HEK293 (cell line): ENCODE measurements at regions of chr13 and their contacts with region 1.

Region 1: GRCh38 chr13:111066544-111066943 is 48.6 kb upstream of the ARHGEF7 start:
- H3K4me3 ChIP-seq: no peak overlapping the region
- H3K27ac ChIP-seq: no peak overlapping the region
- H3K4me1 ChIP-seq: no peaks in the 10 kb centered on the region
- CTCF ChIP-seq: no peak

Region 2: DNA sequence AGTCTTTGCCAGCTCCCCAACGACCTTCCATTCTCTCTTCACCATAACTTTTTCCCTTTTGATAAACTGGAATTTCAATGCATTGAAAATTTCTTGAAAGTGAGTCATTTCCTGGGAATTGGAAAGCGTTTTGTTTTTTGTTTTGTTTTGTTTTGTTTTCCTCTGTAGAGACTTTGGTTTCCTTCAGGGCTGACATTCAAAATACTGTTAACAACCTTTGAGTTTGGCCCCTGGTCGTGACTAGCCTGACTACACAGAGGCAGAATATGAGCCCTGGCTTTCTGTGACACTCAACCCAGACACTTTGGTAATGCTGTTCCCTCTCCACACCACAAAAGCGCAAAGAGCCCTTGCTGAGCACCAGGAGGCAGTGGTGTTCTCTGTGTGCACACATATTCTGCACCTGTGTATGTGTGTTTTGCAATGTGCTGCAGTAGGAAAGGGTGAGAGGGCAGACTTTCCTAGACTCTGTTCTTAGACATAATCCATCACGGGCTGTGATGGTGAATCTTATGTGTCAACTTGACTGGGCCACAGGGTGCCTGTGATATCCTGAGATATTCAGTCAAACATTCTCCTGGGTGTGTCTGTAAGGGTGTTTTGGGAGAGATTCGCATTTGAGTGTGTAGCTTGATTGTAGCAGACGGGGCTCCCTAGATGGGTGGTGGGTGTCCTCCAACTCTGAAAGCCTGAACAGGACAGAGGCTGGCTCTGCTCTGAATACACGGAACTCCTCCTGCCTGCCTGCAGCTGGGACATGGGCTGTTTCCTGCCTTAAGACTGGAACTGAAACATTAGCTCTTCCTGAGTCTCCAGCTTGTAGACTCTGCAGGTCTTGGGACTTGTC is 122.2 kb before region 1 on chr13:
- CTCF ChIA-PET with region 1: interaction called, 11 read pairs
- POLR2A ChIA-PET with region 1: no interaction called
- H3K4me3 ChIP-seq: no peak overlapping the region
- H3K27ac ChIP-seq: no peak overlapping the region
- H3K4me1 ChIP-seq: no peaks in the 10 kb centered on the region
- CTCF ChIP-seq: no peak

Region 3: DNA sequence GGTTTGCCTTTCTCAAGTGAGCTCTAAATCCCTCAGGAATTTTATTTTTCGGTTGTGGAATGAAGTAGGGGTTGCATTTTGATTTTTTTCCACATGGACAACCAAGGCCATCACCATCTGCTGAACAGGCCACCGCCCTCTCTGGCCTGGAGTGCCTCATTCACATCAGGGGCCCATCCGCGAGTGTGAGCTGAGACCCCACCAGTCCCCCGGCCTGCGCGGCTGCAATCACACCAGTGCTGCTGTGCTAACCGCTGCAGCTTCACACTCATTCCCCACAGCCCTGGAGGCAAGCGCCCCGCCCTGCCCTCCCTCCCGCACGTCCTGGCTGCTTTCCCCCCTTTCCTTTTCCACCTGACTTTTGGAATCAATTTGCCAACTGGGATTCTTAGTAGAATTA is 12.8 kb after region 1 on chr13:
- CTCF ChIA-PET with region 1: interaction called, 14 read pairs
- POLR2A ChIA-PET with region 1: no interaction called
- H3K4me3 ChIP-seq: no peak overlapping the region
- H3K27ac ChIP-seq: no peak overlapping the region
- H3K4me1 ChIP-seq: no peaks in the 10 kb centered on the region
- CTCF ChIP-seq: no peak

Region 4: DNA sequence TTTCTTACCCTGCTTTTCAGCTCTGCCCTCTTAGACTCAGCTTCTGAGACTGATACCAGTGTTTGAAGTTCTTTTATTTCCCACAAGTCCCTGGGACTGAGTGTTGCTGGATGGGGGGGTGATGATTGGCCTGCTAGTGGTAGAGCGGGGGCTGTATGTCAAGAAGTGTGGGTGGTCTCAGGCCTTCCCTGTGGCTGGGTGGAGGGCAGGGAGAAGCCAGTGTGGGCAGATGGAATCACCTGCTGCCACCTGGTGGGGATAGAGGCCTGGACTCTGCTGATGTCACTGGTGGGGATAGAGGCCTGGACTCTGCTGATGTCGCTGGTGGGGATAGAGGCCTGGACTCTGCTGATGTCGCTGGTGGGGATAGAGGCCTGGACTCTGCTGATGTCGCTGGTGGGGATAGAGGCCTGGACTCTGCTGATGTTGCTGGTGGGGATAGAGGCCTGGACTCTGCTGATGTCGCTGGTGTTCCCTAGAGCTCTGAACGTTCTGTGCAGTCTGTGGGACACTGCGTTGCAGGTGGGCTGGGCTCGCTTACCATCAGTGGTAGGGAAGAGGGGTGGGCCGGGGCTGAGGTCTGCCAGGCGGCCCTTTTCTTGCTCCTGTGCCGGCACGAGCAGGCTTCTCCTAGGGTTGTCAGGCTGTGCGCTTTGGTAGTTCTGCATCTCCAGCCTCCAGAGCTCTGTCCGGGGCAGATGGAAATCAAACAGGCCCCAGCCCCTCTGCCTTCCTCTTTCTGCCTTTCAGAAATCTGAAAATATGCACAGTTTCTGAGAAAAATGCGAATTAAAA is 149.8 kb after region 1 on chr13:
- CTCF ChIA-PET with region 1: interaction called, 10 read pairs
- POLR2A ChIA-PET with region 1: no interaction called
- H3K4me3 ChIP-seq: no peak overlapping the region
- H3K27ac ChIP-seq: no peak overlapping the region
- H3K4me1 ChIP-seq: no peaks in the 10 kb centered on the region
- CTCF ChIP-seq: no peak